Activated CD4-positive, alpha-beta T cell treated with anti-CD3 and anti-CD28 coated beads for 36 hours (primary cell): ENCODE measurements at regions of chr3 and their contacts with region 1.

Region 1: DNA sequence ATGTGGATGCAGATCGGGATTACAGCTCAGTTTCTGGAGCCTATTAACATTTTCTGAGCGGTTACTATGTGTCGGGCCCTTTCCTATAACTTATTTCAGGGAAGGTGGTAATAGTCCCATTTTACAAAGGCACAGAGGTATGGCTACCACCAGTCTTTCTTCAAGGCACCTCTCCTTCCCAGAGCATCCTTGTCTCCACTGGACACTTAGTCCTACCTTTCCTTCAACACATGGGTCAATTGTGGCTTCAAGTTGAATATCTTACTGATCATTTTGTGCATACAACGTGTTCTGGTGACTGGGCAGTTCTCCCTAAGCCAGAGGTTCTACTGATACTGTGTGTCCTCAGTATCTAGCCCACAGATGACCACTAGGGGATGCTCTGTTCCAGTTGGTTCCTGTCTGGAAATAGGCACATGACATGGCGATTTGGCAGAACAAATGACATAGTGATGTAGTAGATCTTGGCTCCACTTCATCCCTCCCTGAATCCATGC is 60.7 kb upstream of the CMTM8 start:
- DNase-seq: peak; percentile 75
- ATAC-seq: peak; percentile 87
- H3K4me3 Mint-ChIP-seq: no peak overlapping the region
- H3K27ac Mint-ChIP-seq: peak overlapping the region; percentile 44
- H3K4me1 Mint-ChIP-seq: peaks cover 8% of the 10 kb centered on the region
- H3K27me3 Mint-ChIP-seq: no peaks in the 10 kb centered on the region

Region 2: GRCh38 chr3:32238453-32239306 is 60.9 kb after region 1 on chr3 and contains the start of gene CMTM8:
- CTCF ChIA-PET with region 1: interaction called, 44 read pairs
- POLR2A ChIA-PET with region 1: no interaction called
- intact Hi-C with region 1: loop called (anchors 2 to 5 kb)
- DNase-seq: peak; percentile 84
- ATAC-seq: peak; percentile 86
- H3K4me3 Mint-ChIP-seq: peak within 1 kb of the TSS; percentile 82
- H3K27ac Mint-ChIP-seq: peak within 1 kb of the TSS; percentile 45
- H3K4me1 Mint-ChIP-seq: peaks cover 27% of the 10 kb centered on the region
- H3K27me3 Mint-ChIP-seq: peaks cover 8% of the 10 kb centered on the region
- total RNA-seq, gene CMTM8: 8.1 to 9.3 TPM

Region 3: GRCh38 chr3:32296256-32297204 is 118.8 kb after region 1 on chr3:
- CTCF ChIA-PET with region 1: interaction called, 9 read pairs
- POLR2A ChIA-PET with region 1: no interaction called
- intact Hi-C with region 1: loop called (anchors 2 to 5 kb)
- DNase-seq: peak; percentile 78
- ATAC-seq: peak; percentile 81
- H3K4me3 Mint-ChIP-seq: peak overlapping the region; percentile 46
- H3K27ac Mint-ChIP-seq: peak overlapping the region; percentile 67
- H3K4me1 Mint-ChIP-seq: peaks cover 33% of the 10 kb centered on the region
- H3K27me3 Mint-ChIP-seq: no peaks in the 10 kb centered on the region

Region 4: DNA sequence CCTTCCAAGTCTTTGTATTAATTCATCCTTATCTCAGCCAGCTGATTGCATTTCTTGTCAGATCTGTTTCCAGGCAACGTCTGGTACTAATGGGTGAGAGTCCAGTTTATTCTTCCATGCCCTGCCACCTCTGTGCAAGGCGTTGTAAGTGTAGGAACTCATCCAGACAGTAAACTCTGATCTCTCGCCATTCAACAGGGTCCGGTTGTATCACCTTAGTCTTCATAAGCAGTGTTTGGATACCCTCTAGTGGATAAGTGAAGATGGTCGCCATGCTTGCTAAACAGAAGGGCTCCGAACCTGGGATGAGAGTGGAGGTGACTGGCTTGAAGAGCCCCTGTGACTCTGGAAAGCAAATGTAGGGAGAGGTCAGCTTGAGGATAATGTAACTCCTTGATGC is 162.3 kb after region 1 on chr3:
- CTCF ChIA-PET with region 1: interaction called, 31 read pairs
- POLR2A ChIA-PET with region 1: no interaction called
- intact Hi-C with region 1: loop called (anchors 1 kb)
- DNase-seq: peak; percentile 35
- ATAC-seq: peak; percentile 66
- H3K4me3 Mint-ChIP-seq: no peak overlapping the region
- H3K27ac Mint-ChIP-seq: no peak overlapping the region
- H3K4me1 Mint-ChIP-seq: peaks cover 23% of the 10 kb centered on the region
- H3K27me3 Mint-ChIP-seq: no peaks in the 10 kb centered on the region

Region 5: DNA sequence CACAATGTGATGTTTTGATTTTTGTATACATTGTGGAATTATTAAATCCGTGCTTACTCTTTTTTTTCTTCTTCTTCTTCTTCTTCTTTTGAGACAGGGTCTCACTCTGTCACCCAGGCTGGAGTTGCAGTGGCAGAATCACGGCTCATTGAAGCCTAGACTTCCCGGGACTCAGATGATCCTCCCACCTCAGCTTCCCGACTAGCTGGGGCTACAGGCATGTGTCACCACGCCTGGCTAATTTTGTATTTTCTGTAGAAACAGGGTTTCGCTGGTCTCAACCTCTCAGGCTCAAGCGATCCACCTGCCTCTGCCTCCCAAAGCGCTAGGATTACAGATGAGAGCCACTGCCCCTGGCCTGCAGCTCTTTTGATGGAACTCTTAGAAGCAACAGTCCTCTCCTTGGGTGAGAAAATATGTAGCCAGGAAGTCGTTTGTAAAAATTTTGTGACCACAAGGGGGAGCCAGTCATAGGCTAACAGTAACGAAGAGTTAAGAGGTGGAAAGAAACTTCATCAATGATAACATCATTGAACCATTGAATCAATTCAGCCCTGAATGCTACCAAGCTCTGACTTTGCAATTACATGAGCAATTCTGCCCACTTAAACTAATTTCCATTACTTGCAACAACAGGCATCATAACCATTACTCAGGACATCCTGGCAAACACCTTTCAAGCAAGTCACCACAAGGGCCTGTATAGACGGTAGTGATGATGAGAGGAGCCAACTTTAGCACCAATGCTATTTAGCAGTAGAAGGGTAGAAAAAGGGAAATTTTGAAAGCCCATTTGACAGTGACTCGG is 197.2 kb after region 1 on chr3:
- CTCF ChIA-PET with region 1: interaction called, 7 read pairs
- POLR2A ChIA-PET with region 1: no interaction called
- intact Hi-C with region 1: loop called in 1 of 2 experiments (anchors 1 kb)
- DNase-seq: peak; percentile 77
- ATAC-seq: peak; percentile 64
- H3K4me3 Mint-ChIP-seq: no peak overlapping the region
- H3K27ac Mint-ChIP-seq: peak overlapping the region; percentile 35
- H3K4me1 Mint-ChIP-seq: peaks cover 35% of the 10 kb centered on the region
- H3K27me3 Mint-ChIP-seq: no peaks in the 10 kb centered on the region

Region 6: GRCh38 chr3:32467333-32468070 is 289.8 kb after region 1 on chr3:
- CTCF ChIA-PET with region 1: interaction called, 6 read pairs
- POLR2A ChIA-PET with region 1: no interaction called
- intact Hi-C with region 1: loop called (anchors 2 kb)
- DNase-seq: peak; percentile 84
- ATAC-seq: peak; percentile 77
- H3K4me3 Mint-ChIP-seq: no peak overlapping the region
- H3K27ac Mint-ChIP-seq: no peak overlapping the region
- H3K4me1 Mint-ChIP-seq: peaks cover 45% of the 10 kb centered on the region
- H3K27me3 Mint-ChIP-seq: no peaks in the 10 kb centered on the region

Region 7: GRCh38 chr3:32492684-32493436 is 315.1 kb after region 1 on chr3:
- CTCF ChIA-PET with region 1: no interaction called
- POLR2A ChIA-PET with region 1: no interaction called
- intact Hi-C with region 1: no loop called
- DNase-seq: no peak
- ATAC-seq: no peak
- H3K4me3 Mint-ChIP-seq: no peak overlapping the region
- H3K27ac Mint-ChIP-seq: no peak overlapping the region
- H3K4me1 Mint-ChIP-seq: peaks cover 18% of the 10 kb centered on the region
- H3K27me3 Mint-ChIP-seq: no peaks in the 10 kb centered on the region

Region 8: DNA sequence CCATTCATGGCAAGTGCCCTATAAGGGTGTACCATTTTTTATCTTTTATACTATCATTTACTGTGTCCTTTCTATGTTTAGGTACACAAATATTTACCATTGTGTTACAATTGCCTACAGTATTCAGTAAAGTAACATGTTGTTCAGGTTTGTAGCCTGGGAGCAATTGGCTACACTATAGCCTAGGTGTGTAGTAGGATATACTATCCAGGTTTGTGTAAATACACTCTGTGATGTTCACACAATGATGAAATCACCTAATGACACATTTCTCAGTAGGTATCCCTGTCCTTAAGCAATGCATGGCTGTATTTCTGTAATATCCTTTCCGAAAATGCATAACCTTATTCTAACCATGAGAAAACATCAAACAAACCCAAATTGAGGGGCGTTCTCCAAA is 489.4 kb after region 1 on chr3:
- CTCF ChIA-PET with region 1: no interaction called
- POLR2A ChIA-PET with region 1: no interaction called
- intact Hi-C with region 1: loop called (anchors 1 to 5 kb)
- DNase-seq: no peak
- ATAC-seq: no peak
- H3K4me3 Mint-ChIP-seq: no peak overlapping the region
- H3K27ac Mint-ChIP-seq: no peak overlapping the region
- H3K4me1 Mint-ChIP-seq: no peaks in the 10 kb centered on the region
- H3K27me3 Mint-ChIP-seq: no peaks in the 10 kb centered on the region